Activated CD8-positive, alpha-beta T cell treated with anti-CD3 and anti-CD28 coated beads for 36 hours (primary cell): ENCODE measurements at regions of chr1 and their contacts with region 1.

Region 1: DNA sequence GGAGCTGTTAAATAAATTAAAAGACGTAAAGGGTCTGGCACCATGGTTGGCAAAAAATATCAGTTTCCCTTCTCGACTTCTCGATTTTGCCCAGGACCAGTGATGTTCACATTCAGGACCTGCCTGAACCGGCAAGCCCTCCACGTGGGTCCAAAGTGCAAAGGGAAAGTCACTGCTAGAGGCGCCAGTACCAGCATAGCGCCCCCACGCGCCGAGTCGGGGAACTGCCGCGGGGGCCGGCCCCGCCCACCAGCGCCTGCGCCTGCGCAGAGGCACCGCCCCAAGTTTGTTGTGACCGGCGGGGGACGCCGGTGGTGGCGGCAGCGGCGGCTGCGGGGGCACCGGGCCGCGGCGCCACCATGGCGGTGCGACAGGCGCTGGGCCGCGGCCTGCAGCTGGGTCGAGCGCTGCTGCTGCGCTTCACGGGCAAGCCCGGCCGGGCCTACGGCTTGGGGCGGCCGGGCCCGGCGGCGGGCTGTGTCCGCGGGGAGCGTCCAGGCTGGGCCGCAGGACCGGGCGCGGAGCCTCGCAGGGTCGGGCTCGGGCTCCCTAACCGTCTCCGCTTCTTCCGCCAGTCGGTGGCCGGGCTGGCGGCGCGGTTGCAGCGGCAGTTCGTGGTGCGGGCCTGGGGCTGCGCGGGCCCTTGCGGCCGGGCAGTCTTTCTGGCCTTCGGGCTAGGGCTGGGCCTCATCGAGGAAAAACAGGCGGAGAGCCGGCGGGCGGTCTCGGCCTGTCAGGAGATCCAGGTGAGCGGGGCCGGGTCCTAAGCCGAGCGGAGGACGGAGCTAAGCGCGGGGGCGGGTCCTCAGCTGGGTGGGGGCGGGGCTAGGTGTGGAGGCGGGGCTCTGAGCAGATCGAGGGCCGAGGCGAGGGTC is at the start of gene PINK1:
- DNase-seq: peak; percentile 86
- ATAC-seq: peak; percentile 92
- H3K4me3 Mint-ChIP-seq: peak within 1 kb of the TSS; percentile 81
- H3K27ac Mint-ChIP-seq: peak within 1 kb of the TSS; percentile 73
- H3K4me1 Mint-ChIP-seq: peaks cover 11% of the 10 kb centered on the region
- H3K27me3 Mint-ChIP-seq: peaks cover 2% of the 10 kb centered on the region
- CTCF ChIP-seq: peak; percentile 99
- total RNA-seq, gene PINK1: 2.7 to 3.3 TPM

Region 2: DNA sequence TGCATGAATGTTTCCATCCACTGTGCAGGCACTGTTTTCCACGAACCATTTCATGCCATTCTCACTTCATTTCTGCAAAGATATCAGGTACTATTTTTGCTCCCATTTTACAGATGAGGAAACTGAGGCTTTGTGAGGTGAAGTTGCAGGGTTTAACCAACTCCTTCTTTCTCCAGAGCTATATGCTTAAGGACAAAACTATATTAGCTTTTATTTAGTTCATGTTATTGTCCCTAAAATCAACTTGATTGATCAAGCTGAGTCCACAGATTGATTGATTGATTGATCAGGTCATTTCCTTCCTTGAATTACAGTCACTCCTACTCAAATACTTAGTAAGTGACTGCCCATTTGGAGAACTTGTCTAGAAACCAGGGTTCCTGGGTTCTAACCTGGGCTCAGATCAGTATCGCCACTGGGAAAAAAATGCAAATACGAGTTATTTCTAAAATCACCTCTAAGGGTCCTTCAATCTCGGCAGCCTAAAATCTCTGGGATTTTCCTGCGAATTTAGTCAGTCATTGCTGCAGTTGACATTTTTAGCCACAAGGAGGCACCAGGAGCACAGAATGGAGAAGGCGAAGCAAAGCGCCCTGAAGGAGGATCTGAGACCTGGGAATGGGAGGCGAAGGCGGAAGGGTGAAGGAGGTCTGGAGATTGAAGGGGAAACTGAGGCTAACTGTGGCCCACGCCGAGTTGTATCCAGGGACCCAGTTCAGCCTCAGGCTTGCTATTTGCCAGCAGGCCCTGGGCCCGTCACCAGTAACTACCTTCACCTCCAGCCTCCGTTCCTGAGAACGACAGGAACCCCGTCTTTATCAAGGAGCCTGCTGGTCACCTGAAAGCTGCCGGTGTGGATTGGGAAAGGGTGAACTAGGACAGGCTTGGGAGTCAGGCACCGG is 111.2 kb before region 1 on chr1:
- CTCF ChIA-PET with region 1: interaction called, 22 read pairs
- POLR2A ChIA-PET with region 1: no interaction called
- intact Hi-C with region 1: no loop called
- DNase-seq: peak; percentile 81
- ATAC-seq: peak; percentile 49
- H3K4me3 Mint-ChIP-seq: no peak overlapping the region
- H3K27ac Mint-ChIP-seq: no peak overlapping the region
- H3K4me1 Mint-ChIP-seq: peaks cover 4% of the 10 kb centered on the region
- H3K27me3 Mint-ChIP-seq: peaks cover 22% of the 10 kb centered on the region
- CTCF ChIP-seq: peak; percentile 86

Region 3: GRCh38 chr1:20574686-20575540 is 58.5 kb before region 1 on chr1:
- CTCF ChIA-PET with region 1: interaction called, 31 read pairs
- POLR2A ChIA-PET with region 1: no interaction called
- intact Hi-C with region 1: no loop called
- DNase-seq: peak; percentile 85
- ATAC-seq: peak; percentile 87
- H3K4me3 Mint-ChIP-seq: no peak overlapping the region
- H3K27ac Mint-ChIP-seq: no peak overlapping the region
- H3K4me1 Mint-ChIP-seq: no peaks in the 10 kb centered on the region
- H3K27me3 Mint-ChIP-seq: peaks cover 18% of the 10 kb centered on the region
- CTCF ChIP-seq: peak; percentile 43

Region 4: DNA sequence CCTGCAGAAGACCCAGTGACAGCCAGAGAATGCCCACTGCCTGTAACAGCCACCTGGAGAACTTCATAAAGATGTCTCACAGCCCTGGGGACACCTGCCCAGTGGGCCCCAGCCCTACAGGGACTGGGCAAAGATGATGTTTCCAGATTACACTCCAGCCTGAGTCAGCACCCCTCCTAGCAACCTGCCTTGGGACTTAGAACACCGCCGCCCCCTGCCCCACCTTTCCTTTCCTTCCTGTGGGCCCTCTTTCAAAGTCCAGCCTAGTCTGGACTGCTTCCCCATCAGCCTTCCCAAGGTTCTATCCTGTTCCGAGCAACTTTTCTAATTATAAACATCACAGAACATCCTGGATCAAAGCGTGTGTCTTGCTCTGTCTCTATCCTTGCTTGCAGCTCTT is 14.9 kb before region 1 on chr1:
- CTCF ChIA-PET with region 1: interaction called, 10 read pairs
- POLR2A ChIA-PET with region 1: interaction called, 3 read pairs
- intact Hi-C with region 1: no loop called
- DNase-seq: no peak
- ATAC-seq: no peak
- H3K4me3 Mint-ChIP-seq: no peak overlapping the region
- H3K27ac Mint-ChIP-seq: no peak overlapping the region
- H3K4me1 Mint-ChIP-seq: no peaks in the 10 kb centered on the region
- H3K27me3 Mint-ChIP-seq: no peaks in the 10 kb centered on the region
- CTCF ChIP-seq: no peak

Region 5: DNA sequence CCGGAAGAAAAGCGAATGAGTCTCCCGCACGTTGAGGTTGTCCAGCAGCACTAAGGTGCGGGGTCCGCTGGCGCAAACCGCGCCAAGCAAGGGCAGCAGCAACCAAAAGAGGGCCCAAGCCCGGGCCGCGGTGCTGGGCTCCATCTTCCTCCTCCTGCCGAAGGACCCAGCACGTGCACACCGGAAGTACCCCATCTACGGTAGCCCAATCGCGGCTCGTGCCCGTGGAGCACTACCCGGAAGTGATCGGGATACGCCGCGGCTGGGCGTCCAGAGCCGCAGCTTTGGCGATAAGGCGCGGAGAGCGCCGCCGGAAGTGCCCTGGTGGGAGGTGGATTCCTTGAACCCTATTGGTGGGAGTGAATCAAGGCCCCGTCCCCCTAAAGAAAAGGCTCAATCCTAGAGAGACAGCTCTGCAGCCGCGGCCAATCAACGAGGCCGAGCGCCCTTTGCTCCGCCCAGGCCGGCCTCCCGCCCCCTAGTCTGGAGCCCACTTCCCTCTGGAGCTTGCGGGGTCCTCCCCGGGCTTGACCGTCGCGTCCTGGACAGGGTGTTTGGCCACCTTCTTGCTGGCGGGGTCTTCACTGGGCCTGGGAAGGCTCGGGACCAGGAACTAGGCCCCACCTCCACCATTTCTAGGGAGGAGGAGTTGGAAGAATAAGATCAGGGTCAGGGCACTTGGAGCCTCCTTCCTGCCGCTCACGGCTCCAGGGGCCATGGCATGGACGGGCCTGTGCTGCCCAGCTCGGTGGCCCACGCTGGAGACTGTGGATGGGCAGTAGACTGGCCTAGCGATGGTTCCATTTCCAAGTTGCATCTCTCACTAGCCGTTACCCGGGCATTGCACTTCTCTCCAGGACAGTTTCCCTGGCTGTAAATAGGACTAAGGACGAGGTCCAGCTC is 28.0 kb after region 1 on chr1 and contains the start of gene DDOST:
- CTCF ChIA-PET with region 1: interaction called, 20 read pairs
- POLR2A ChIA-PET with region 1: interaction called, 3 read pairs
- intact Hi-C with region 1: no loop called
- DNase-seq: peak; percentile 97
- ATAC-seq: peak; percentile 96
- H3K4me3 Mint-ChIP-seq: peak within 1 kb of the TSS; percentile 85
- H3K27ac Mint-ChIP-seq: peak within 1 kb of the TSS; percentile 99
- H3K4me1 Mint-ChIP-seq: peaks cover 39% of the 10 kb centered on the region
- H3K27me3 Mint-ChIP-seq: no peaks in the 10 kb centered on the region
- CTCF ChIP-seq: no peak
- total RNA-seq, gene DDOST: 140 to 159 TPM

Region 6: GRCh38 chr1:20705196-20705755 is 71.8 kb after region 1 on chr1:
- CTCF ChIA-PET with region 1: no interaction called
- POLR2A ChIA-PET with region 1: no interaction called
- intact Hi-C with region 1: no loop called
- DNase-seq: no peak
- ATAC-seq: no peak
- H3K4me3 Mint-ChIP-seq: no peak overlapping the region
- H3K27ac Mint-ChIP-seq: no peak overlapping the region
- H3K4me1 Mint-ChIP-seq: no peaks in the 10 kb centered on the region
- H3K27me3 Mint-ChIP-seq: no peaks in the 10 kb centered on the region
- CTCF ChIP-seq: no peak